Heart left ventricle (tissue), 16 donors: ENCODE measurements at regions of chr9 and their contacts with region 1.

Region 1: GRCh38 chr9:72038890-72039410 is 21.5 kb downstream of the C9orf57 start:
- DNase-seq: peak; percentile 64 to 72 (median 71)
- ATAC-seq: peak; percentile 62 to 90 (median 86)
- H3K4me3 ChIP-seq: no peak overlapping the region
- H3K27ac ChIP-seq: no peak overlapping the region
- H3K4me1 ChIP-seq: peaks cover 0 to 9% (median 0%) of the 10 kb centered on the region in 12 donors
- H3K27me3 ChIP-seq: no peaks in the 10 kb centered on the region
- CTCF ChIP-seq: peak; percentile 87 to 99 (median 97)
- POLR2A ChIP-seq: no peak

Region 2: GRCh38 chr9:71812385-71812784 is 226.6 kb before region 1 on chr9:
- intact Hi-C with region 1: loop called in 1 of 10 experiments (anchors 5 kb)
- DNase-seq: peak in 4 of 5 donors; percentile 23 to 67 (median 42)
- ATAC-seq: peak; percentile 65 to 93 (median 82)
- H3K4me3 ChIP-seq: no peak overlapping the region
- H3K27ac ChIP-seq: peak overlapping the region in 4 of 12 donors; percentile 11 to 37 (median 24)
- H3K4me1 ChIP-seq: peaks cover 0 to 14% (median 6%) of the 10 kb centered on the region in 12 donors
- H3K27me3 ChIP-seq: no peaks in the 10 kb centered on the region
- CTCF ChIP-seq: peak in 3 of 12 donors; percentile 23 to 32 (median 24)
- POLR2A ChIP-seq: no peak

Region 3: DNA sequence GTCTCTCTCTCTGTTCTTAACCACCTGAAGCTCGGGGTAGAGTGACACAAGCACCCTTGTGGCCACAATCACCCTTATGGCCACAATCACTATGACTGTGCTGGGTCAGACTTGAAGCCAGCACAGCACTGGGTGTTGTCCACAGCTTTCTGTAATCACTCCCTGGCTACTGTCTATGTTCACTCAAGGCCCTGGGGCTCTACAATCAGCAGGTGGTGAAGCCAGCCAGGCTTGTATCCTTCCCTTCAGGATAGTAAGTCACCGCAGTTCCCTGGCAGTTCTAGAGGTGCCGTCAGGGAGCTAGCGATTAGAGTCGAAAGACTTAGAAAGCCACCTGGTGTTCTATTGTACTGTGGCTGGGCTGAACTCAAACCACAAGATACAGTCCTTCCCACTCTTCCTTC is 154.5 kb after region 1 on chr9:
- intact Hi-C with region 1: no loop called
- DNase-seq: no peak
- ATAC-seq: no peak
- H3K4me3 ChIP-seq: no peak overlapping the region
- H3K27ac ChIP-seq: no peak overlapping the region
- H3K4me1 ChIP-seq: no peaks in the 10 kb centered on the region
- H3K27me3 ChIP-seq: no peaks in the 10 kb centered on the region
- CTCF ChIP-seq: no peak
- POLR2A ChIP-seq: no peak

Region 4: DNA sequence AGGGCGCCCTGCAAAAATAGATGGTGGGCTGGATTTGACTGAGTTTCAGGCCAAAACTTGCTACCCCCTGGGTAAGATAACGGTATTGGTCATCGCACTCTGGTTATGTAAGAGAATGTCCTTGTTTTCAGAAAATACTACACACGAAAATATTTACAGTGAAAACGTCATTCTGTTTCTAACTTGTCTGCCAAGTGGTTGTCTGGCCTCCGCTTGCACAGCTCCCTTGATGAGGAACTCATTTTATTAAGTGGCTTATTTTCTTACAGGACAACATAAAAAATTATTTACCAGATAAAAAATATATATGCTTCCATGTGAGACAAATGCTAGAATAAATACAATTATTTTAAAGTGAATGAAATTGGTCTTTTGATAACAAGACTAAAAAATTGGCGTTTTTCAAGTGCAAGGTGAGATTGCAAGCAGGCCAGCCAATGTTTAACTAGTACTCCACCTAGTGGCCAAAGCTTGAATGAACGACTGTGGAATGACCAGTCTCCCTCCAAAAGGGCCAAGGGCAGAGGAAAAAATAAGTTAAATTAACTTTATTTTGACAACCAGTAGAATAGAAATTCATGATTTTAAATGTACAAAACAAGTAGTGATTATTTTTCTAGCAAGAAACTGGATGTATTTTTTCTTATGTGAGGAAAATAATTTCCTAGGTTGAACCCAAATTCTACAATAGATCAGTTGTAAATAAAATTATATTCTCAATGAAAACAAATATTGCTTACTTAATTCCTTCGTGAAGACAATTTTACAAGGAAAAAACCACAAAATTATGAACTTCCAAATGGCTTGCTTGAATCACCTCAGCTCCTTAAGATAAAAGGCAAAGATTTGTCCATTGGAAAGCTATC is 232.9 kb after region 1 on chr9:
- intact Hi-C with region 1: loop called (anchors 1 to 2 kb)
- DNase-seq: peak in 2 of 5 donors; percentile 30 to 36
- ATAC-seq: peak in 1 of 4 donors; percentile 56
- H3K4me3 ChIP-seq: no peak overlapping the region
- H3K27ac ChIP-seq: no peak overlapping the region
- H3K4me1 ChIP-seq: no peaks in the 10 kb centered on the region
- H3K27me3 ChIP-seq: no peaks in the 10 kb centered on the region
- CTCF ChIP-seq: peak; percentile 77 to 92 (median 87)
- POLR2A ChIP-seq: no peak

Region 5: GRCh38 chr9:72327631-72328030 is 288.7 kb after region 1 on chr9:
- intact Hi-C with region 1: no loop called
- DNase-seq: no peak
- ATAC-seq: no peak
- H3K4me3 ChIP-seq: no peak overlapping the region
- H3K27ac ChIP-seq: no peak overlapping the region
- H3K4me1 ChIP-seq: no peaks in the 10 kb centered on the region
- H3K27me3 ChIP-seq: no peaks in the 10 kb centered on the region
- CTCF ChIP-seq: no peak
- POLR2A ChIP-seq: no peak

Region 6: DNA sequence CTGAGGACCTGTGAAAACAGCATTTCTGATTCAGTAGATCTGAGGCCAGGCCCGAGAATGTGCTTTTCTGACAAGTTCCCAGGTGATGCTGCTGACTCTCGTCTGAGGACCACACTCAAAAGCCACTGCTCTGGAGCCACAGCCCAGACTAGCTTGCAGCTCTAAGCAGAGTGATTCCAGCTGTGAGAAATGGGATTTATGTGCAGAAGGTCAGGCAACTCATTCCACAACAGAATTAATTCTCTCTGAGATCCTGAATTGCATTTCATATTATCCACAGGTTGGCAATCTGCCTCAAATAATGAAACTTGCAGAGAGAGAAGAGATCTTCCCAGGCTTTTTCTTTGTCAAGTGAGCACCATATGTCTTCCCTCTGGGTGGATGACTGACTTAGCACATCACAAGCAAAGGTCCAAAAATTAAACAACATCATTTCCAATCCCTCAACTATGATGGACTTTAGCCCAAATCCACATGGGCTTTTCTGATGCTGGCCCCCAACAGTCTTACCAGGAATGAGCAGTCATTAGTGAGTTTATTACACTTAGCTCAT is 773.7 kb after region 1 on chr9:
- intact Hi-C with region 1: loop called in 1 of 10 experiments (anchors 10 kb)
- DNase-seq: peak in 1 of 5 donors; percentile 27
- ATAC-seq: peak in 1 of 4 donors; percentile 52
- H3K4me3 ChIP-seq: no peak overlapping the region
- H3K27ac ChIP-seq: no peak overlapping the region
- H3K4me1 ChIP-seq: peaks cover 0 to 3% (median 0%) of the 10 kb centered on the region in 12 donors
- H3K27me3 ChIP-seq: no peaks in the 10 kb centered on the region
- CTCF ChIP-seq: no peak
- POLR2A ChIP-seq: no peak